ENCODE measurements at regions of chr15 and their contacts with region 1.

Region 1: GRCh38 chr15:73560501-73561117 is 72.6 kb downstream of the NPTN start:
- DNase-seq: no peak
- CTCF ChIP-seq: peak; percentile 29

Region 2: DNA sequence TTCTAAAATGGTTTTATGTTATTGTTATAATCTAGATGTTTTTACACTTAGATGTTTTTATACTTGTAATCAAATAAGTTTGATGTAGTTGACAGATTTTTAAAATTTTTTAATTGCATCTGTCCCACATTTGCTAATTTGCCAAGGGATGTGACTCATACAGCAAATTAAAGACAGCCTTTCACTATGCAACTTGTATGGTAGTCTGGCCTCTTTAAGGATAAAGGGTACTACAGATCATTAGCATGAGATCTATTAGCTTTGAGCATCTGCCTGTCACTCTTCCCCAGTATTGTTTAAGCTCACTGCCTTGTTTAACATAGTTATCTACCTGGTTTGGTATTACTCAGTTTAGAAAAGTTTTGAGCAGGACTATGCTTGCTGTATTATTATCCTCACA is 10.4 kb before region 1 on chr15:
- CTCF ChIA-PET with region 1: interaction called, 18 read pairs
- POLR2A ChIA-PET with region 1: no interaction called
- DNase-seq: no peak
- CTCF ChIP-seq: no peak

Region 3: GRCh38 chr15:73571346-73571745 is 10.7 kb after region 1 on chr15:
- CTCF ChIA-PET with region 1: interaction called, 12 read pairs
- POLR2A ChIA-PET with region 1: no interaction called
- DNase-seq: no peak
- CTCF ChIP-seq: no peak

Region 4: DNA sequence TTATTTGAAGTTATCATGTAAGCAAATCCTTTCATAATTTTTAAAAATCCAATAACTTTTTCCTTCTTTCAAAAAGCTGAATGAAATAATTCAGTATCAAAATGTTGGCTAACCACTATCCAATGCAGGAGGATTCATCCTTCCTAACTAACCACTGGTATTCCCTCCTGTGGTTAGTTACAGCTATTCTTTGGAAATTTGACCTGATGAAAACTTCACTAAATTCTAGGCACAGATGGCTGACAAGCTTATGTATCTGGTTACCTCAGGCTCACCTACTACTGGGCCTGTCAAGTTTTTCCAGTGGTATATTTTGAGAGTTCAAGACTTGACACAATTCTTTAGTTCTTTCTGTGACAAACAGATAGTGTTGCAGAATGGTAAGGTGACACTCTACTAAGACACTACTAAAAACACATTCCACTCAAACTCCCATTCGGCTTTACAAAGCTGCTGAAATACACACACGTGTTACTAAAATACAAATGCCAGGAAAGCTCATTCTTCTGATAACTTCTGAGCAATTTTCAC is 56.8 kb after region 1 on chr15:
- CTCF ChIA-PET with region 1: no interaction called
- POLR2A ChIA-PET with region 1: no interaction called
- DNase-seq: no peak
- CTCF ChIP-seq: no peak

Region 5: DNA sequence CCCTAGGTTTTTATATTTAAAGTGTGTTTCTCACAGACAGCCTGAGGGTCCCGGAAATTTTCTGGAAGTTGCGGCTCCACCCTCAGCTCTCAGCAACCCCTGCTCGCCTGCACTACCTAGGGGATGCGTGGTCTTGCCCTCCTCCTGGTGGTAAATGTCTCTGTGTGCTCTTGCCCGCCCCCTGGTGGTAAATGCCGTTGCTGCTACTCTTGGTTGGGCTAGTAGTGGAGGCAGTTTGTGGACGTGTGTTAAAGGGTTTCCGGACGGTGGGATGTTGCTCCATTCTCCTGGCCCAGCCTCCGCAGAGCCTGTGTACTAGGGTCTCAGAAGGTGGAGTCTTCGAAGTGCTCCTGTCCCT is 404.1 kb after region 1 on chr15:
- CTCF ChIA-PET with region 1: no interaction called
- POLR2A ChIA-PET with region 1: no interaction called
- DNase-seq: peak; percentile 86
- CTCF ChIP-seq: peak; percentile 95